Left ventricle myocardium superior (tissue), 1 donor: ENCODE measurements at regions of chr7 and their contacts with region 1.

Region 1: GRCh38 chr7:129298268-129298893 is 73.6 kb downstream of the AHCYL2 start:
- DNase-seq: peak; percentile 48
- ATAC-seq: no peak

Region 2: GRCh38 chr7:129017933-129018538 is 280.3 kb before region 1 on chr7:
- intact Hi-C with region 1: no loop called
- DNase-seq: no peak
- ATAC-seq: no peak

Region 3: DNA sequence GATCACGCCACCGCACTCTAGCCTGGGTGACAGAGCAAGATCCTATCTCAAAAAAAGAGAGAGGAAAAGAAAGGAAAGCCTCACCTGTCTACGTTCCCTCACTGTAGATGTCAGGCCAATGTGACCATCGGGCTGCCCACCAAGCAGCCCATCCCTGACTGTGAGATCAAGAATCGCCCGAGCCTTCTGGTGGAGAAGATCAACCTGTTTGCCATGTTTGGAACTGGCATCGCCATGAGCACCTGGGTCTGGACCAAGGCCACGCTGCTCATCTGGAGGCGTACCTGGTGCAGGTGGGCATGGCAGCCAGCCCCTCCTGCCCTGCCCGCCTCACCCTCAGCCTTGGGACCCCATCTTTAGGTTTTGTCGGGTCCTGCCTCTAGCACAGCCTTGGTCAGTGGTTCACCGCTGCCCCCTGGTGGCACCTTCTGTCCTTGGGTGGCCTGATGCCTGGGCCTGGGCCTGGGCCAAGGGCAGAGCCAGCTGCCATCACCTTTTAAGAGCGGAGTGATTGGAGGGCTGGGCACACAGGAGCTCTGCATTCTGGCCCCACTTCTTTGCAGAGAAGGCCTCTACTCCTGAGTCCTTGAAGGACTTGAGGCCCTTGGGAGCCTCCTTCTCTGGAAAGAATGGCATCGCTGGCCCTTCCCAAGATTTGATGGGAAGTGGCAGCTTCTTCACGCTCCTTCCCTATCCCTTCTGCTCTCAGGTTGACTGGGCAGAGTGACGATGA is 88.0 kb before region 1 on chr7:
- intact Hi-C with region 1: no loop called
- DNase-seq: peak; percentile 92
- ATAC-seq: peak; percentile 93

Region 4: DNA sequence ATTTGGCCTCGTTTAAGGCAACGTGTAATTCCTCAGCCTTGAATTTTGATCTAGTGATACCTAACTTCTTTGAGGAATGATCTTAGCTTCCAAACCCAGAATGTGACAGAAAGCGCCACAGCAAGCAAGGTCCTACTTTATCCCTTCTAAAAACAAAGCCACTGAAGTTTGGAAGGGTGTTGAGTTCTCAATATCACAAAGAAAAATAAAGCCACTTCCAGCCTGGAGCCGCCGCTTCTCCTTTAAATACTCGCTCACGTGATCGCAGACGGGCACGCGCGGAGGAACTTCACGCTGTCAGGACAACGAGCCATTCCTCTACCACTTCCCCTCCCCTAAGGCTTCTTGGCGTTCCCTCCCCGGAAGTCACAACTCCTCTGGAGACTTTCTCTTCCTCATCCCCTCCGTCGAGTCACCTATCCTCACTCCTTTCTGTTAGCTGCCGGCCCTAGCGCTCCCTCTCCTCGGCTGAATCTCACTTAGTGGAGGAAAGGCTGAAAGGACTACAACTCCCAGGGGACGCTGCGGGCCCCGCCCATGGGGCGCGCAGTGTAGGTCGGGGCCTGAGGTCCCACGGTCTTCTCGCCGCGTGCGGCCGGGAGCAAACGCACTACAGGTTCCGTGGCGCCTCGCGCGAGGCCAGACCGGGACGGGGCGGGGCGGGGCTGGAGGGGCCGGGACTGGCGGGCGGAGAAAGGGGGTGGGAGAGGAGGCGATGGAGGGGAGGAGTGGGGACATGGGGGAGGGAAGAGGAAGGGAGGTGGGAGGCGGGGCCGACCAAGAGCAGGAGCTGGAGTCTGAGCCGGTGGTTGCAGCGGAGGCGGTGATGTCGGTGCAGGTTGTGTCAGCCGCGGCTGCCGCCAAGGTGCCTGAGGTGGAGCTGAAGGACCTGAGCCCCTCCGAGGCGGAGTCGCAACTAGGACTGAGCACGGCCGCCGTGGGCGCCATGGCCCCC is 73.9 kb before region 1 on chr7 and contains the start of gene AHCYL2:
- intact Hi-C with region 1: loop called (anchors 5 kb)
- DNase-seq: peak; percentile 99
- ATAC-seq: peak; percentile 98
- total RNA-seq, gene AHCYL2: 4.3 TPM